ENCODE measurements at regions of chr4 and their contacts with region 1.

Region 1: DNA sequence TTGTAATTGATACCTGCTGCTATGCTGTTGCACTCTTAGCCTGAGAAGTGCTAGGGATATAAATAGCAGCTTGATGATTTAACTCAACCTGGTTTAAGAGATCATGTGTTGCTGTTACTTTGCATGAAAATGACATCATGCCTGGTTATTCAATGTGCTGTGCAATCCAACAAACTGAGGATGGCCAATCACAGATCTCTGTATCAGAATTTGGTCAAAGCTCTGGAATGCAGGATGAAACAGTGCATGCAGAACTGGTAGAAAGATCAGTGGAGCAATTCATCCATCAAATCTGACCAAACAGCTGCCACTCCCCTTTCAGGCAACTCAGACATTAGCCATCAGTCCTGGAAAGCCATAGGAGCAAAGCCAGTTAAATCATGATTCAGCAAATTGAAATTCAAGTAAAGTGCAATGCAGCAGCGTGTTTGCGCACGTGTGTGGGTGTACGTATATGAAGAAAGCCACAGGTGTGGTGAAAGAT is 160.3 kb upstream of the RASGEF1B start:
- DNase-seq: peak; percentile 99
- H3K4me3 ChIP-seq: no peak overlapping the region
- H3K27ac ChIP-seq: peak overlapping the region; percentile 97
- H3K4me1 ChIP-seq: peaks cover 13% of the 10 kb centered on the region
- H3K27me3 ChIP-seq: no peaks in the 10 kb centered on the region
- CTCF ChIP-seq: no peak

Region 2: DNA sequence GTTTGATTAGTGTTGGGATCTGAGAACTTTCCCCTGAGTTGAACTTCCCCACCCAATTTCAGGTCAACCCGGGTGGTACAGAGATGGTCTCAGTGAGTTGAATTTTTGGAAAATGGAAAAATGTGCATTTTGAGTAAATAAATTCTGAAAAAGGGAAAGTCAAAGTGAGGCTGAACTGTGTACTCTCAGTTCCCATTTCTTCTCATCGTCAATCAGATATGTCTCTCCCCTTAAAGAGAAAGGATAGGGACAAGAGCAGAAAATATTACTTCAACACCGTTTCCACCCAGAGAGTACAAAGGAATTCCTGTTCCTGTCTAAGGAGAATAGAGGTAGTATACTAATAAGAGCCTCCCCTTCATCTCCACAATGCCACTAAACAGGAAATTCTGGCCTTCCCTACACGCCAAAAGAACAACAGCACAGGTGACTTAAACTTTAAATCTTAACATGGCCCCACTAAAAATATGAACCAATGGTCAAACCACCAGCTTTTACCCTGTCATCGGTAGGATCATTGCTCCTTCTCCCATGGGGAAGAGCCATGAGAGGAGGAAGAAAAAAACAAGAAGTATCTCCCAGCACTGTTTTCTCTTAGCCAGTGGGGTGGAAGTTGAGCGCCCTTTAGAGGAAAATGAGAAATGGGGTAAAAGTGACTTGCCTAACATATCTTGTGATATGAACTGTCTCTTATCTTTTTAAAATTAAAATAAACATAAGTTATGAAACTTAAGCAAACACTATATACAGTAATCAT is 571.2 kb before region 1 on chr4:
- CTCF ChIA-PET with region 1: no interaction called
- dilution Hi-C with region 1: no loop called
- in situ Hi-C with region 1: no loop called
- intact Hi-C with region 1: no loop called
- DNase-seq: no peak
- H3K4me3 ChIP-seq: no peak overlapping the region
- H3K27ac ChIP-seq: no peak overlapping the region
- H3K4me1 ChIP-seq: no peaks in the 10 kb centered on the region
- H3K27me3 ChIP-seq: peaks cover 4% of the 10 kb centered on the region
- CTCF ChIP-seq: no peak

Region 3: DNA sequence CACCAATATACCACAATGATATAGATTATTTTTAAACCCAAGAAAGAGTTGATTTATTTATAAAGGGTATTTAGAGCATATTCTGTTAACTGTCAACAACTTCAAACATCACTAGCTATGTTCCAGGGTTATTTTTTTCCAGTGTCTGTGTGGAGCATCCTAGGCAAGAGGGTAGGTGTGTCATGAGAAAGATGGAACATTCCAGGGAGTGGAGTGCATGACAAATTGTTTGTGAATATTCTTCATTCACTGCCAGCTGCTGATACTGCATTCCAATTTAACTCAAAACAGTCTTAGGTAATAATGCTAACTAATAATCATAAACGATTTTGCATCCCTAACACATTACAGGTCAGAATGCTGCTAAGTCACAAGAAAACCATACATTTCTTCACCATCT is 11.6 kb before region 1 on chr4:
- CTCF ChIA-PET with region 1: no interaction called
- dilution Hi-C with region 1: no loop called
- in situ Hi-C with region 1: no loop called
- intact Hi-C with region 1: loop called (anchors 1 kb)
- DNase-seq: peak; percentile 63
- H3K4me3 ChIP-seq: no peak overlapping the region
- H3K27ac ChIP-seq: peak overlapping the region; percentile 41
- H3K4me1 ChIP-seq: no peaks in the 10 kb centered on the region
- H3K27me3 ChIP-seq: no peaks in the 10 kb centered on the region
- CTCF ChIP-seq: no peak

Measured in mammary epithelial cell (primary cell).